ENCODE measurements at regions of chr1 and their contacts with region 1.

Region 1: DNA sequence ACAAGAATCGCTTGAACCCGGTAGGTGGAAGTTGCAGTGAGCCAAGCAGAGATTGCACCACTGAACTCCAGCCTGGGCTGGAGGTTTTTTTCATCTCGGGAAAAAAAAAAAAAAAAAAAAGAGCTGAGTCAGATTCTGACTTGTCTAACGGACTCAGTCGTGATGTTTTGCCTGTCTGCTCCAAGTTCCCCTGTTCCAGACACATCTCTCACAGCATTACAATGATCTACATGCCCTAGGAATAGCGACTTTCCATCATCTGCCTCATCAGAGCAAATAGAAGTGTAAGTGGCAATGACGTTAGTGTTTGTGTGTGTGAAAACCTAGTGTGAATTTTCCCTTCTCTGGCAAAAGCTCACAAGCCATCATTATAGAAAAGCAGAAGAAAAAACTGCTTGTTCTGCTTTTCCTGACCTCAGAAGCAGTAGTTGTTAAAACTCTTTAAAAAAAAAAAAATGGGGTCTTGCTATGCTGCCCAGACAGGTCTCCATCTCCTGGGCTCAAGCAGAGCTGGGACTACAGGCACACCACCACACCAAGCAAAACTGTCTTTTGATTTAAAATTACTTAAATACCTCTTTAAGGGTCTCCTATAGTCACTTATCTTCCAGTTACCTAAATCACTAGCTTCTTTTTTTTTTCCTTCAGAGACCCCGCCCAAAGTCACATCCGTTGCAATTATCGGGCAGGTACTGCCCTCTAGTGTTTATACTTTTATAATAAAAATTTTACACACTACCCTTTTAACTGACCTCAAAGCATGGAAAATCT is 37.3 kb downstream of the PLEKHO1 start:
- DNase-seq: peak; percentile 23
- H3K4me3 Mint-ChIP-seq: no peak overlapping the region
- H3K27ac Mint-ChIP-seq: peak overlapping the region; percentile 37
- H3K4me1 Mint-ChIP-seq: peaks cover 13% of the 10 kb centered on the region
- H3K27me3 Mint-ChIP-seq: no peaks in the 10 kb centered on the region

Region 2: GRCh38 chr1:149886396-149887195 is 300.4 kb before region 1 on chr1:
- CTCF ChIA-PET with region 1: interaction called, 6 read pairs
- POLR2A ChIA-PET with region 1: interaction called, 14 read pairs
- DNase-seq: peak; percentile 94
- H3K4me3 Mint-ChIP-seq: no peak overlapping the region
- H3K27ac Mint-ChIP-seq: no peak overlapping the region
- H3K4me1 Mint-ChIP-seq: peaks cover 17% of the 10 kb centered on the region
- H3K27me3 Mint-ChIP-seq: no peaks in the 10 kb centered on the region

Region 3: DNA sequence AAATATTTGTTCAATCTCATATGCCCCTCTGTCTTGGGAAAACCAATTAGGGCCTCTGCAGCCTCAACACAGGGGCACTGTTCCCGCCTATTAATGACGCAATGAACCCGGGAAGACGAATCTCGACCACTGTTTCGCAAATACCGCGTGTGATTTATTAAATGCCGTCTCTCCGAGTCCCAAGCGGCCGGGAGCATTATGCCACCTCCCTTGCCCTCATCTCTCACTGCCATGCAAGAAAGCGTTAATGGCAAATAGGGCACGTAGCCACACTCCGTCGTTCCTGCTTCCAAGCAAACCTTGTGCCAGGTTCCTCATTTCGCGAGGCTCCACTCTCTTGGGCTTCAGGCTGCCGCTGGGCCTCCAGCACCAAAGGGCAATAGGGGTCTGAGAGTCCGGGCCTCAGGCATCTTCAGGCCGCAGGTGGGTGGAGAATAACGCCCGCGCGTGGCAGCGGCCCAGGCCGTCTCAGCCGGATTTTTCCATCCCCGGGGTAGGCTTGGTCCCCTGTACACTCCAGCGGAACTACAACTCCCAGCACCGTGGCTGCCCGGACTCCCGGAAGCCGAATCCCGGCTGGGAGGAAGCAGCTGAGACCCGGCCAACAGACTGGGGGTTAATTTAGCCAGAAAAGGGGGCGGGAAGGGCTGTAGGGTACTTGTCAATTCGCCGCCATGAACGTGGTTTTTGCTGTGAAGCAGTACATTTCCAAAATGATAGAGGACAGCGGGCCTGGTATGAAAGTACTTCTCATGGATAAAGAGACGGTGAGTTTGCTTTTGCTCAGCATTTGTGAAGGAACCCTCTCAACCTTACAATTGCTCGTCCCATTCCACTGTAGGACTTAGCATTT is 119.6 kb before region 1 on chr1 and contains the start of gene VPS45:
- CTCF ChIA-PET with region 1: interaction called, 23 read pairs
- POLR2A ChIA-PET with region 1: no interaction called
- DNase-seq: peak; percentile 88
- H3K4me3 Mint-ChIP-seq: peak within 1 kb of the TSS; percentile 95
- H3K27ac Mint-ChIP-seq: peak within 1 kb of the TSS; percentile 95
- H3K4me1 Mint-ChIP-seq: peaks cover 38% of the 10 kb centered on the region
- H3K27me3 Mint-ChIP-seq: no peaks in the 10 kb centered on the region
- total RNA-seq, gene VPS45: 34.1 to 38.1 TPM

Region 4: DNA sequence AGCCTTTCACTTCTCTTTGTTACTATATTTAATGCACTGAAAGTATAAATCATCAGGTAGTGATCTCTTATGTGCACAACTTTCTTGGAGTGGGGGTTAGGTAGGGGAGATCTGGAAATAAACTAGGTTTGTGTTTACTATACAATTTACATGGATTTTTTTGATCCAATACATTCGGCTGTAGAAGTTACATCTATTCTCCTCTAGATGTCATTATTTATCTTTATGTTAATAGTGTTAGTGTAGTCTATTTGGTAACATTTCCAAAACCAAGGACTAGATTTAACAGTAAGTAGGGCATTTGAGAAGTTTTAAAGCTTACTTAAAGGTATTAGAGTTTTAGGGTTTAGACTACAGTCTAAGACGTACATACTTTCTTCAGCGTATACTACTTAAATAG is 114.0 kb before region 1 on chr1:
- CTCF ChIA-PET with region 1: interaction called, 23 read pairs
- POLR2A ChIA-PET with region 1: no interaction called
- DNase-seq: no peak
- H3K4me3 Mint-ChIP-seq: no peak overlapping the region
- H3K27ac Mint-ChIP-seq: no peak overlapping the region
- H3K4me1 Mint-ChIP-seq: peaks cover 41% of the 10 kb centered on the region
- H3K27me3 Mint-ChIP-seq: no peaks in the 10 kb centered on the region

Region 5: GRCh38 chr1:150162862-150163706 is 23.9 kb before region 1 on chr1:
- CTCF ChIA-PET with region 1: interaction called, 17 read pairs
- POLR2A ChIA-PET with region 1: interaction called, 5 read pairs
- DNase-seq: no peak
- H3K4me3 Mint-ChIP-seq: no peak overlapping the region
- H3K27ac Mint-ChIP-seq: peak overlapping the region; percentile 6
- H3K4me1 Mint-ChIP-seq: peaks cover 69% of the 10 kb centered on the region
- H3K27me3 Mint-ChIP-seq: peaks cover 3% of the 10 kb centered on the region

Region 6: DNA sequence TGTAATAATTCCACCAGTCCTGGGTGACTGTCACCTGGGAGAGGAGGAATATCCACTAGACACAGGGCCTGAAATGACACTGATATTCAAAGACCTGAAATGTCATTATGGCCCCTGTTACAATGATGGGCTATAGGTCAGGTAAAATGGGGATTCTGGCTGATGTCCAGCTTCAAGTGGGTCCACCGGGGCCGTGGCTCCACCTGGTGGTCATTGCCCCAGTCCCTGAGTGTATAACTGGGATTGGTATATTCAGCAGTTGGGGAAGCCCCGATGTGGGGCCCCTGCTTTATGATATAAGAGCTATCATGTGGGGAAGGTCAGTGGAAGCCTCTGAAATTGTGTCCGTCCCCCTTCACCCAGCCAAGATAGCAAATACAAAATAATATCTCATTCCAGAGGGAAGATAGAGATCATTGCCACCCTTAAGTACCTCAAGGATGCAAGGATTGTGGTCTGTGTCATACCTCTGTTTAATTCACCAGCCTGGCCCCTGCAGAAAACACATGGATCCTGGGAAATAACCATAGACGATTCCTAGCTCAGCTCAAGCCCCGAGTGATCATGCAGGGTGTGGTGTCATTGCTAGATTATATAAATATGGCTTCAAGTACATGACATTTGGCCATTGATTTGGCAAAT is 17.9 kb before region 1 on chr1:
- CTCF ChIA-PET with region 1: interaction called, 11 read pairs
- POLR2A ChIA-PET with region 1: no interaction called
- DNase-seq: peak; percentile 50
- H3K4me3 Mint-ChIP-seq: no peak overlapping the region
- H3K27ac Mint-ChIP-seq: no peak overlapping the region
- H3K4me1 Mint-ChIP-seq: peaks cover 15% of the 10 kb centered on the region
- H3K27me3 Mint-ChIP-seq: peaks cover 8% of the 10 kb centered on the region